AG04450 (cell line): ENCODE measurements at regions of chr7 and their contacts with region 1.

Region 1: GRCh38 chr7:84914598-84914997 is 272.3 kb downstream of the SEMA3D start:
- DNase-seq: no peak
- H3K4me3 ChIP-seq: no peak overlapping the region
- H3K27ac ChIP-seq: no peak overlapping the region
- H3K27me3 ChIP-seq: no peaks in the 10 kb centered on the region
- CTCF ChIP-seq: no peak

Region 2: GRCh38 chr7:84688671-84689070 is 225.9 kb before region 1 on chr7:
- CTCF ChIA-PET with region 1: no interaction called
- POLR2A ChIA-PET with region 1: no interaction called
- DNase-seq: no peak
- H3K4me3 ChIP-seq: no peak overlapping the region
- H3K27ac ChIP-seq: no peak overlapping the region
- H3K27me3 ChIP-seq: no peaks in the 10 kb centered on the region
- CTCF ChIP-seq: no peak

Region 3: GRCh38 chr7:84900215-84900614 is 14.4 kb before region 1 on chr7:
- CTCF ChIA-PET with region 1: interaction called, 12 read pairs
- POLR2A ChIA-PET with region 1: no interaction called
- DNase-seq: no peak
- H3K4me3 ChIP-seq: no peak overlapping the region
- H3K27ac ChIP-seq: no peak overlapping the region
- H3K27me3 ChIP-seq: no peaks in the 10 kb centered on the region
- CTCF ChIP-seq: no peak